Endothelial cell of umbilical vein (primary cell): ENCODE measurements at regions of chr22 and their contacts with region 1.

Region 1: GRCh38 chr22:41229730-41230400 is 10.9 kb downstream of the CHADL start:
- DNase-seq: peak; percentile 83
- H3K4me3 ChIP-seq: no peak overlapping the region
- H3K27ac ChIP-seq: peak overlapping the region; percentile 78
- H3K4me1 ChIP-seq: peaks cover 30% of the 10 kb centered on the region
- H3K27me3 ChIP-seq: no peaks in the 10 kb centered on the region
- CTCF ChIP-seq: no peak
- POLR2A ChIP-seq: no peak

Region 2: GRCh38 chr22:41198027-41198580 is 31.8 kb before region 1 on chr22:
- CTCF ChIA-PET with region 1: no interaction called
- POLR2A ChIA-PET with region 1: no interaction called
- dilution Hi-C with region 1: no loop called
- intact Hi-C with region 1: no loop called
- DNase-seq: peak; percentile 36
- H3K4me3 ChIP-seq: peak overlapping the region in 2 of 3 experiments; percentile 15 to 65
- H3K27ac ChIP-seq: no peak overlapping the region
- H3K4me1 ChIP-seq: peaks cover 5% of the 10 kb centered on the region
- H3K27me3 ChIP-seq: no peaks in the 10 kb centered on the region
- CTCF ChIP-seq: peak in 1 of 2 donors; percentile 2
- POLR2A ChIP-seq: no peak

Region 3: GRCh38 chr22:41217553-41218157 is 12.2 kb before region 1 on chr22:
- CTCF ChIA-PET with region 1: interaction called, 6 read pairs
- POLR2A ChIA-PET with region 1: no interaction called
- dilution Hi-C with region 1: no loop called
- intact Hi-C with region 1: loop called (anchors 2 kb)
- DNase-seq: peak; percentile 72
- H3K4me3 ChIP-seq: no peak overlapping the region
- H3K27ac ChIP-seq: peak overlapping the region; percentile 29
- H3K4me1 ChIP-seq: peaks cover 12% of the 10 kb centered on the region
- H3K27me3 ChIP-seq: no peaks in the 10 kb centered on the region
- CTCF ChIP-seq: no peak
- POLR2A ChIP-seq: no peak